Activated CD4-positive, alpha-beta T cell treated with anti-CD3 and anti-CD28 coated beads for 36 hours (primary cell): ENCODE measurements at regions of chr20 and their contacts with region 1.

Region 1: GRCh38 chr20:54219751-54220426 is 12.0 kb downstream of the PFDN4 start:
- DNase-seq: no peak
- ATAC-seq: no peak
- H3K4me3 Mint-ChIP-seq: no peak overlapping the region
- H3K27ac Mint-ChIP-seq: no peak overlapping the region
- H3K4me1 Mint-ChIP-seq: peaks cover 28% of the 10 kb centered on the region
- H3K27me3 Mint-ChIP-seq: no peaks in the 10 kb centered on the region

Region 2: DNA sequence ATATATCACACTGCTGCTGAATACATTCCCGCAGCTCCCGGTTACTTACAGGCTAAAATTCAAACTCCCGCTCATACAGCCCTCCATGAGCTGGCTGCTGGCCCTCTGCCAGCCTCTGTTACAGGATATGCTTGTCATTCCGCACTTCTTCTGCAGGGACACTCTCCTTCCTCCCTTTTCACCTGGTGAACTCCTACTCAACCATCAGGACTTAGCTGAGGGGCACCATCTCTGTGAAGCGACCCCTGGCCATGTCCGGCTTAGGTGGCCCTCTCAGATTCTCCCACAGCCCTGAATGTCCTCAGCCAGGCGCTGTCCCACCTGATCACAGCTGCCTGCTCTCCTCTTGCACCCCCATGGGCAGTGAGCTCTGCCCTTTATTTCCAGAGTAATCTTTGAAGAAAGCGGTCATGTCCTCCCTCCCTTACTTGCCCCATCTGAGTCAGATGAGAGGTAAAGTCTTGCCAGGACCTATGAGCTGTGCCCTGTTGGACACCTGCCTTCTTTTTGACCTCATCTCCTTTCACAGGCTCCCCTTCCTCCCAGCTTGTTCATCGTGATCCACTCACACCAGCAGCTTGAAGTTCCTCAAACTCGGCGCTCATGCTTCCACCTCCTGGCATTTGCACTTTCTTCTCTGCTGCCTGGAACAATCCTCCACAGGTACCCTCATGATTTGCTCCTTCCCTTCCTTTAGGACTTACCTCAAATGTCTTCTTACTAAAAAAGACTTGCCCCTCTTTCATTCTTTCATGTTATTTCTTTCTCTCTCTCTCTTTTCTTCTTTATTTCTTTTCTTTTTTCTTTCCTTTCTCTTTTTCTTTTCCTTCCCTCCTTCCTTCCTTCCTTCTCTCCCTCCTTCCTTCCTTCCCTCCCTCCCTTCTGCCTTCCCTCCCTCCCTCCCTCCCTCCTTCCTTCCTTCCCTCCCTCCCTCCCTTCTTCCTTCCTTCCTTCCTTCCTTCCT is 51.7 kb before region 1 on chr20:
- CTCF ChIA-PET with region 1: no interaction called
- POLR2A ChIA-PET with region 1: no interaction called
- intact Hi-C with region 1: no loop called
- DNase-seq: no peak
- ATAC-seq: no peak
- H3K4me3 Mint-ChIP-seq: no peak overlapping the region
- H3K27ac Mint-ChIP-seq: no peak overlapping the region
- H3K4me1 Mint-ChIP-seq: peaks cover 5% of the 10 kb centered on the region
- H3K27me3 Mint-ChIP-seq: peaks cover 53% of the 10 kb centered on the region

Region 3: GRCh38 chr20:54284934-54285704 is 65.2 kb after region 1 on chr20:
- CTCF ChIA-PET with region 1: interaction called, 3 read pairs
- POLR2A ChIA-PET with region 1: no interaction called
- intact Hi-C with region 1: loop called (anchors 1 to 5 kb)
- DNase-seq: peak; percentile 68
- ATAC-seq: peak; percentile 87
- H3K4me3 Mint-ChIP-seq: peak overlapping the region; percentile 62
- H3K27ac Mint-ChIP-seq: peak overlapping the region; percentile 94
- H3K4me1 Mint-ChIP-seq: peaks cover 22% of the 10 kb centered on the region
- H3K27me3 Mint-ChIP-seq: peaks cover 11% of the 10 kb centered on the region

Region 4: GRCh38 chr20:54320115-54320607 is 100.3 kb after region 1 on chr20:
- CTCF ChIA-PET with region 1: no interaction called
- POLR2A ChIA-PET with region 1: no interaction called
- intact Hi-C with region 1: loop called in 1 of 2 experiments (anchors 5 kb)
- DNase-seq: peak; percentile 8
- ATAC-seq: peak; percentile 83
- H3K4me3 Mint-ChIP-seq: no peak overlapping the region
- H3K27ac Mint-ChIP-seq: peak overlapping the region; percentile 70
- H3K4me1 Mint-ChIP-seq: peaks cover 47% of the 10 kb centered on the region
- H3K27me3 Mint-ChIP-seq: peaks cover 23% of the 10 kb centered on the region

Region 5: GRCh38 chr20:54345301-54345724 is 125.4 kb after region 1 on chr20:
- CTCF ChIA-PET with region 1: no interaction called
- POLR2A ChIA-PET with region 1: no interaction called
- intact Hi-C with region 1: no loop called
- DNase-seq: no peak
- ATAC-seq: peak; percentile 42
- H3K4me3 Mint-ChIP-seq: no peak overlapping the region
- H3K27ac Mint-ChIP-seq: no peak overlapping the region
- H3K4me1 Mint-ChIP-seq: peaks cover 12% of the 10 kb centered on the region
- H3K27me3 Mint-ChIP-seq: peaks cover 16% of the 10 kb centered on the region

Region 6: GRCh38 chr20:54468082-54468481 is 248.2 kb after region 1 on chr20:
- CTCF ChIA-PET with region 1: no interaction called
- POLR2A ChIA-PET with region 1: no interaction called
- intact Hi-C with region 1: loop called (anchors 10 kb)
- DNase-seq: no peak
- ATAC-seq: no peak
- H3K4me3 Mint-ChIP-seq: no peak overlapping the region
- H3K27ac Mint-ChIP-seq: no peak overlapping the region
- H3K4me1 Mint-ChIP-seq: no peaks in the 10 kb centered on the region
- H3K27me3 Mint-ChIP-seq: peaks cover 15% of the 10 kb centered on the region

Region 7: DNA sequence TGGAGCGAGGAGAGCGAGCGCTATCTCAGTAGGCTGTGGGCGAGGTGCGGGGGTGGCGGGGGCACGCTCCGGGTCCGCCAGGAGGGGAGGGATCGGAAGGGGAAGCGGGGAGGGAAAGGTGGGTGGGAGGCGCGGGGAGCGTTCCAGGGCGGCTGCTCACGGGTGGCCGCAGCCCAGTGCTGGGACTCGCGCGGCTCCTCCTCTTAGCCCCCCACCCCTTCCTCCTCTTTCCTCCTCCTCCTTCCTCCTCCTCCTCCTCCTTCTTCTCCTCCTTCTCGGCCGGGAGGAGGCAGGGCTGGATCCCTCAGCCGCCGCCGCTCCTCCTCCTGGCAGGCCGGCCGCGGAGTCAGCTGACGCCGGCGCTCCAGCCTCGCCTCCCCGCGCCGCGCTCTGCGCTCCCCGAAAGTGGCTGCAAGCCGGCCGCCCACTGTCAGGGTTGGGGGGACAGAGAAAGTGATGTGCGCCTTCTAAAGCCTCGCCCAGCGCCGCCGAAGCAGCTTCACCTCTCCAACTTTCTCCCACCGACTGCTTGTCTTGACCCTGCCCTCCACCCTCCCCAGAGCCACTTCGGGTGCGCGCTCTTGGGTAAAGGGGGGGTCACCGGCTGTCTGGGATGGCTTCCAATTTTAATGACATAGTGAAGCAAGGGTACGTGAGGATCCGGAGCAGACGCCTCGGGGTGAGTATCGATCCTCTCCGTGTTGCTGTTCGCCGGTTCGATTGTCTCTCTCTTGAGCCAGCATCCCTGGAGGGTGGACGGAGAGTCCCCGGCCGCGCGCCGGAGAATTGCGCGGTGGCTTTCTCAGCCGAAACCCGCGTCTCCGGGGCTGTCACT is 255.7 kb after region 1 on chr20 and contains the start of gene DOK5:
- CTCF ChIA-PET with region 1: no interaction called
- POLR2A ChIA-PET with region 1: no interaction called
- intact Hi-C with region 1: loop called in 1 of 2 experiments (anchors 10 kb)
- DNase-seq: no peak
- ATAC-seq: no peak
- H3K4me3 Mint-ChIP-seq: peak within 1 kb of the TSS; percentile 53
- H3K27ac Mint-ChIP-seq: no peak within 1 kb of the TSS
- H3K4me1 Mint-ChIP-seq: peaks cover 9% of the 10 kb centered on the region
- H3K27me3 Mint-ChIP-seq: peaks cover 54% of the 10 kb centered on the region
- total RNA-seq, gene DOK5: 2.1 to 2.9 TPM

Region 8: GRCh38 chr20:54649511-54649962 is 429.6 kb after region 1 on chr20:
- CTCF ChIA-PET with region 1: interaction called, 11 read pairs
- POLR2A ChIA-PET with region 1: no interaction called
- intact Hi-C with region 1: loop called (anchors 1 kb)
- DNase-seq: peak; percentile 84
- ATAC-seq: peak; percentile 53
- H3K4me3 Mint-ChIP-seq: no peak overlapping the region
- H3K27ac Mint-ChIP-seq: no peak overlapping the region
- H3K4me1 Mint-ChIP-seq: no peaks in the 10 kb centered on the region
- H3K27me3 Mint-ChIP-seq: peaks cover 10% of the 10 kb centered on the region